ENCODE measurements at regions of chr6 and their contacts with region 1.

Region 1: GRCh38 chr6:41941280-41942066 is at the start of gene CCND3:
- DNase-seq: peak; percentile 57 to 95
- H3K4me3 ChIP-seq: peak within 1 kb of the TSS; percentile 84 to 93
- H3K27ac ChIP-seq: peak within 1 kb of the TSS; percentile 72 to 83
- H3K4me1 ChIP-seq: peaks cover 4 to 20% of the 10 kb centered on the region in 2 donors
- H3K27me3 ChIP-seq: no peaks in the 10 kb centered on the region
- CTCF ChIP-seq: peak in 1 of 3 experiments; percentile 1
- total RNA-seq, gene CCND3: 130 TPM

Region 2: DNA sequence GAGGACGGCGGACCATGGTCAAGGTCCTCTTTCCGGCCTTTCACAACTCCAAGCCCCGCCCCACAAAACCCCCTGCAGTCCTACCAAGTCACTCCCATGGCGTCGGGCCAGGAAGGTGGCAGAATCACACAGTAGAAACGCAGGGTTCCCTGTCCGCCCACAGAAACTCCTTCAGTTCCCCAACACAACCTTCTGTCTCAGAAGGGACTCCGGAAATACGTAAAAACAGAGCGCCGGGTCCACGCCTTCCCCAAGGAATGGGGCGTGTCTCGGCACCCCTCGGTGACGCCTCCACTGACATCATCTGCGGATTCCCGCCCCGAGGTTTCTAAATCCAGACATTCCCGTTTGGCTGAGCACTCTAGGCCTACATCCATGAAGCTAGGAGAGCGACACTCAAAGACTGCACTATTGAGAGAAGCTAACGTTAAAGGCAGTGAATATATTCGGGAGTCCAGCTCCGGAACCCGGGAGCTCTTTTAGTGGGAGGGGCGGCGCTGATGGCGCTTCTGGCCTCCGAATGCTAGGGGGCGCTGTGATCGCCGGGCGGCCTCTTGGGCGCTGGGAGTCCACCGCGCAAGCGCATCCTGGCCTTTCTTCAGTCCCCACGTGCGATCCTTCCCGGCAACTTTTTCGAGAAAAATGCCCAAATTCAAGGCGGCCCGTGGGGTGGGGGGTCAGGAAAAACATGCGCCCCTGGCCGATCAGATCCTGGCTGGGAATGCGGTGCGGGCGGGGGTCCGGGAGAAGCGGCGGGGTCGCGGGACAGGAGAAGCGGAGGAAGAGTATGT is 20.4 kb before region 1 on chr6 and contains the starts of genes BYSL and MED20:
- intact Hi-C with region 1: loop called (anchors 1 kb)
- DNase-seq: peak; percentile 69 to 95
- H3K4me3 ChIP-seq: peak within 1 kb of the TSS; percentile 92 to 97
- H3K27ac ChIP-seq: peak within 1 kb of the TSS; percentile 98 to 99
- H3K4me1 ChIP-seq: peaks cover 8 to 19% of the 10 kb centered on the region in 2 donors
- H3K27me3 ChIP-seq: no peaks in the 10 kb centered on the region
- CTCF ChIP-seq: peak; percentile 94 to 97 (median 96)
- total RNA-seq, gene BYSL: 1.6 TPM
- total RNA-seq, gene MED20: 13.5 TPM

Region 3: GRCh38 chr6:41996997-41997396 is 55.5 kb after region 1 on chr6:
- intact Hi-C with region 1: no loop called
- DNase-seq: no peak
- H3K4me3 ChIP-seq: no peak overlapping the region
- H3K27ac ChIP-seq: no peak overlapping the region
- H3K4me1 ChIP-seq: no peaks in the 10 kb centered on the region
- H3K27me3 ChIP-seq: no peaks in the 10 kb centered on the region
- CTCF ChIP-seq: no peak

Measured in ascending aorta (tissue), 2 donors.